ENCODE measurements at regions of chr16 and their contacts with region 1.

Region 1: GRCh38 chr16:75244844-75245758 is 6.3 kb downstream of the BCAR1 start:
- DNase-seq: no peak
- H3K4me3 ChIP-seq: peak overlapping the region in 1 of 3 experiments; percentile 7
- H3K27ac ChIP-seq: peak overlapping the region; percentile 82
- H3K4me1 ChIP-seq: peaks cover 63% of the 10 kb centered on the region
- H3K27me3 ChIP-seq: no peaks in the 10 kb centered on the region
- CTCF ChIP-seq: no peak

Region 2: GRCh38 chr16:75198135-75198600 is 46.9 kb before region 1 on chr16:
- dilution Hi-C with region 1: no loop called
- DNase-seq: no peak
- H3K4me3 ChIP-seq: no peak overlapping the region
- H3K27ac ChIP-seq: no peak overlapping the region
- H3K4me1 ChIP-seq: no peaks in the 10 kb centered on the region
- H3K27me3 ChIP-seq: peaks cover 11% of the 10 kb centered on the region
- CTCF ChIP-seq: no peak

Region 3: DNA sequence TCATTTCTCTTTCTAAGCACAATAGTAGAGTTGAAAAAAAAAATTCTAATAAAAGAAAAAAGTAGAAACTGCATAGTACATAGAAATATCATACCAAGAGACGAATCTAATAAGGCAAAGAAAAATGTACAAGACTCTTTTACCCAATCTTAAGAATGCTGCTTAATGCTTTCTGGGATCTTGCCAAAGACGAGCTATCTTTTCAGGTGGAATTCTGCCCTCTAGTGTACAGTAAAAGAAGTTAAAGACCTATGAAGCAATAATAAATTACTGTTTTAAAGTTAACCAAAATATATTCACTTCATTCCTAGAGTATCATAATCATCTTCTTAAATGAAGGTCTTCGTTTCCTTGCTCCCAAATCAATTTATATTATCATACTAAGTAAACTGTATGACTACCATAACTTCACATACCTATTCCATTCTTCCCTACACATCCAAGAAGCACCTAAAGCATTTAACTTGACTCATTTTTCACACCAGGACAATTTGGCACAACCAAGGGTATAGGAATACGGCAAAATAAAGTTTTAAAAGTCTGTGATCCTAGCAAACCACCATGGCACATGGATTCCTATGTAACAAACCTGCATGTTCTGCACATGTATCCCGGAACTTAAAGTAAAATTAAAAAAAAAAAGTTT is 140.5 kb after region 1 on chr16:
- dilution Hi-C with region 1: loop called (anchors 25 kb)
- DNase-seq: peak; percentile 46
- H3K4me3 ChIP-seq: no peak overlapping the region
- H3K27ac ChIP-seq: peak overlapping the region; percentile 44
- H3K4me1 ChIP-seq: peaks cover 29% of the 10 kb centered on the region
- H3K27me3 ChIP-seq: no peaks in the 10 kb centered on the region
- CTCF ChIP-seq: peak in 2 of 3 experiments; percentile 28 to 45